Naive thymus-derived CD8-positive, alpha-beta T cell (primary cell): ENCODE measurements at regions of chr1 and their contacts with region 1.

Region 1: DNA sequence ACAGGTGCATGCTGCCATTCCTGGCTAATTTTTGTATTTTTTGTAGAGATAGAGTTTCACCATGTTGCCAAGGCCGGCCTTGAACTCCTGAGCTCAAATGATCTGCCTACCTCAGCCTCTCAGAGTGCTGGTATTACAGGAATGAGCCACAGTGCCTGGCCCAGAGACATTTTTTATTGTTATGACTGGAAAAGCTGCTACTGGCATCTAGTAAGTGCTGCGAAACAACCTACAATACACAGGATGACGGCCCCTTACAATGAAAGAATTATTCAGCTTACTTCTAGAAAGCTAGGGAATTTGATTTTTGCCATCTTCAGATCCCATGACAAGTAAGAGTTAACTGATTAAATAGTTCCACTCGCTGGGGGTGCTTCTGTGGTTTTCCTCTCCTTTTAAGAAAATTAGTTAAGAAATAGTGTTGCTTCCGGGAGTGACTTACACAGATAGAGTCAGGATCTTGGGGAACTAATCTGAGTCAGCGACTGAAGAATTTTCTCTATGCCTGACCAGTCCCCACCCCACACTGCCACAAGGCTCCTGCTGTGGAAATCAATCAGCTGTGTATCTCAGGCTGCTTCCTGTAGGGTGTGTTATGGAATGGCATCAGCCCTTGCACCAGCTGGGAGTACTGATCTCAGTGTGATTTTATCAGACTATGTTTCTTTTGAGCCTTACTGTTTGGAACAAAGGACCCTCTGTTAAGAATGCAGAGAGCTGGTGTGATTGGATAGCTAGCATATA is 93.0 kb upstream of the BMP8A start:
- DNase-seq: no peak
- ATAC-seq: peak; percentile 55 to 59
- H3K4me3 Mint-ChIP-seq: peak overlapping the region in 8 of 10 donors; percentile 1 to 63 (median 51)
- H3K27ac Mint-ChIP-seq: peak overlapping the region in 8 of 10 donors; percentile 20 to 82 (median 52)
- H3K4me1 Mint-ChIP-seq: peaks cover 26 to 64% (median 62%) of the 10 kb centered on the region in 4 donors
- H3K27me3 Mint-ChIP-seq: no peaks in the 10 kb centered on the region

Region 2: GRCh38 chr1:39317910-39318633 is 80.4 kb before region 1 on chr1:
- POLR2A ChIA-PET with region 1: no interaction called
- DNase-seq: no peak
- ATAC-seq: no peak
- H3K4me3 Mint-ChIP-seq: no peak overlapping the region
- H3K27ac Mint-ChIP-seq: peak overlapping the region in 2 of 10 donors; percentile 34 to 72
- H3K4me1 Mint-ChIP-seq: no peaks in the 10 kb centered on the region
- H3K27me3 Mint-ChIP-seq: no peaks in the 10 kb centered on the region

Region 3: DNA sequence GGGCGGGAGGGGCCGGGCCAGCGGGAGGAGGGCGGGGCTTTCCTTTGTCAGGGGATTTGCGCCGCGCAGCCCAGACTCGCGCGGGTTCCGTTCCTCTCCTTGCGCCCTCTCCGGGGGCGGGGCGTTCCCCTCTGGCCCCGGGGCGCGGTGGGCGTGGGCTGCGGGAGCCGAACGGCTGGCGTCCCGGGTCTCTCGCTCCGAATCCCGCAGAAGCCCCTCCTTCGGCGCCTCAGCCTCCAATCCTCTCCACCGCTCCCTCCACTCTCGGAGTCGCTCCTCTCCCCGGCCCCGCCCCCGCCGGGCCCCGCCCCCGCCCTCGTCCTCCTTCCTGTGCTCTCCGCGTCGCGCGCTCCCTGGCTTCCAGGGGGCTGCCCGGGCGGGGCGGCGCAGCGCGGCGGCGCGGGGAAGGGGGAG is 10.2 kb after region 1 on chr1:
- POLR2A ChIA-PET with region 1: interaction called, 15 read pairs
- DNase-seq: peak; percentile 58 to 90 (median 75)
- ATAC-seq: peak; percentile 81 to 85
- H3K4me3 Mint-ChIP-seq: peak overlapping the region in 9 of 10 donors; percentile 65 to 94 (median 90)
- H3K27ac Mint-ChIP-seq: no peak overlapping the region
- H3K4me1 Mint-ChIP-seq: peaks cover 31 to 54% (median 48%) of the 10 kb centered on the region in 4 donors
- H3K27me3 Mint-ChIP-seq: no peaks in the 10 kb centered on the region